ENCODE measurements at regions of chr6 and their contacts with region 1.

Region 1: DNA sequence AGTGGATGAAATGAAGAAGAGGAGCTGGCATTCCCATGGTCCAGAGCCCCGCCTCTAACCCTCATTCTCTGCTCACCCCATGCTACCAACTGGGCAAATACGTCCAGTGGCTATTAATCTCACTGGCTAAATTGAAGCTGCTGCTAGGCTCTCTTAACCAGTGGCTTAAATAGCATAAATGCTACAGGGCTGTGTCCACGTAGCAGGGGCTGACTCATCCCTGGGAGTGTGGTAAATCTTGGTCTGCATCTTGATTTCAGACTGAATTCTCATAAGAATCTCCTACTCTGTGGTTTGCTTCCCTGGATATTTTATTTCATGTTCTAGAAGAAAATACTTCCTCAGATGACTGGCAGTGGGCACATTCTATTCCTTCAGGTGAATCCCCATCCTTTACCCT is 193.1 kb upstream of the ARG1 start:
- DNase-seq: no peak
- H3K4me3 ChIP-seq: no peak overlapping the region
- H3K27ac ChIP-seq: peak overlapping the region; percentile 100
- H3K4me1 ChIP-seq: peaks cover 65% of the 10 kb centered on the region
- H3K27me3 ChIP-seq: no peaks in the 10 kb centered on the region
- CTCF ChIP-seq: no peak

Region 2: DNA sequence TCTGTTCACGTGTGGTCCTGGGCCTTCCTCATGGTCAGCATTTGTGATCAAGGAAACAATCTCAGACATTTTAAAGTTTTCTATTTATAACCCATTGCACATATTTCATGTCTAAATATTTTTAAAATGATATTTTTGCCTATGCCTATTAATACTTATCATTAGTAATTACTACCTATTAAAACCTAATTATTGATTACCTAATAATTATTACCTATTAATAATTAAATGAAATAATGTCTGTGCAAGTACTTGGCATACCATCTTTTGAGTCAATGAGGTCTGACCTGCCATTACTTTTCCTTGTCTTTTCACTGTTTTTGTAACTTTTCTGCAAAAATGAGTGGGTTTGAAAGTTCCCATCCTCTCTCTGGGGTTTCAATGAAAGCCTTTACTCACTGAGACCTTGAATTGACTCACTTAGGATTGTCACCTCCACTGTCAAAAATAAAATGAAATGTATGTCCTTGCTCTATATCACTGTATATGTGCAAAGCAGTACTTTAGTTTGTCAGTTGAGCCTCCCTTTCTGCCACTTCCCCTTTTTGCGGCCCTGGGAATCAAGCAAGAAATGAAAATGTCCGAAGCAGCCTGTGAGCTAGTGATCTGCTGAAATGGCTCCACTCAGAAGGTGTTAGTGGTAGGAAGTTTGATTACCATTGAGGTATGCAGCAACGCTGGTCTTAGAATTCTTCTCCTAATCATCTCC is 1273.8 kb before region 1 on chr6:
- CTCF ChIA-PET with region 1: no interaction called
- POLR2A ChIA-PET with region 1: no interaction called
- intact Hi-C with region 1: no loop called
- DNase-seq: no peak
- H3K4me3 ChIP-seq: no peak overlapping the region
- H3K27ac ChIP-seq: no peak overlapping the region
- H3K4me1 ChIP-seq: peaks cover 6% of the 10 kb centered on the region
- H3K27me3 ChIP-seq: no peaks in the 10 kb centered on the region
- CTCF ChIP-seq: no peak

Region 3: GRCh38 chr6:130602151-130602770 is 777.7 kb before region 1 on chr6:
- CTCF ChIA-PET with region 1: no interaction called
- POLR2A ChIA-PET with region 1: no interaction called
- intact Hi-C with region 1: loop called (anchors 5 kb)
- DNase-seq: peak; percentile 96
- H3K4me3 ChIP-seq: no peak overlapping the region
- H3K27ac ChIP-seq: peak overlapping the region; percentile 85
- H3K4me1 ChIP-seq: peaks cover 45% of the 10 kb centered on the region
- H3K27me3 ChIP-seq: no peaks in the 10 kb centered on the region
- CTCF ChIP-seq: no peak

Region 4: GRCh38 chr6:130900913-130901312 is 479.0 kb before region 1 on chr6:
- CTCF ChIA-PET with region 1: no interaction called
- POLR2A ChIA-PET with region 1: interaction called, 11 read pairs
- intact Hi-C with region 1: no loop called
- DNase-seq: no peak
- H3K4me3 ChIP-seq: no peak overlapping the region
- H3K27ac ChIP-seq: no peak overlapping the region
- H3K4me1 ChIP-seq: no peaks in the 10 kb centered on the region
- H3K27me3 ChIP-seq: no peaks in the 10 kb centered on the region
- CTCF ChIP-seq: no peak

Region 5: GRCh38 chr6:131129689-131130545 is 250.0 kb before region 1 on chr6:
- CTCF ChIA-PET with region 1: interaction called, 3 read pairs
- POLR2A ChIA-PET with region 1: no interaction called
- intact Hi-C with region 1: loop called (anchors 1 kb)
- DNase-seq: no peak
- H3K4me3 ChIP-seq: no peak overlapping the region
- H3K27ac ChIP-seq: peak overlapping the region; percentile 21
- H3K4me1 ChIP-seq: peaks cover 40% of the 10 kb centered on the region
- H3K27me3 ChIP-seq: no peaks in the 10 kb centered on the region
- CTCF ChIP-seq: no peak

Region 6: GRCh38 chr6:131231103-131231502 is 148.8 kb before region 1 on chr6:
- CTCF ChIA-PET with region 1: no interaction called
- POLR2A ChIA-PET with region 1: interaction called, 14 read pairs
- intact Hi-C with region 1: no loop called
- DNase-seq: no peak
- H3K4me3 ChIP-seq: no peak overlapping the region
- H3K27ac ChIP-seq: peak overlapping the region; percentile 65
- H3K4me1 ChIP-seq: peaks cover 73% of the 10 kb centered on the region
- H3K27me3 ChIP-seq: no peaks in the 10 kb centered on the region
- CTCF ChIP-seq: no peak

Region 7: DNA sequence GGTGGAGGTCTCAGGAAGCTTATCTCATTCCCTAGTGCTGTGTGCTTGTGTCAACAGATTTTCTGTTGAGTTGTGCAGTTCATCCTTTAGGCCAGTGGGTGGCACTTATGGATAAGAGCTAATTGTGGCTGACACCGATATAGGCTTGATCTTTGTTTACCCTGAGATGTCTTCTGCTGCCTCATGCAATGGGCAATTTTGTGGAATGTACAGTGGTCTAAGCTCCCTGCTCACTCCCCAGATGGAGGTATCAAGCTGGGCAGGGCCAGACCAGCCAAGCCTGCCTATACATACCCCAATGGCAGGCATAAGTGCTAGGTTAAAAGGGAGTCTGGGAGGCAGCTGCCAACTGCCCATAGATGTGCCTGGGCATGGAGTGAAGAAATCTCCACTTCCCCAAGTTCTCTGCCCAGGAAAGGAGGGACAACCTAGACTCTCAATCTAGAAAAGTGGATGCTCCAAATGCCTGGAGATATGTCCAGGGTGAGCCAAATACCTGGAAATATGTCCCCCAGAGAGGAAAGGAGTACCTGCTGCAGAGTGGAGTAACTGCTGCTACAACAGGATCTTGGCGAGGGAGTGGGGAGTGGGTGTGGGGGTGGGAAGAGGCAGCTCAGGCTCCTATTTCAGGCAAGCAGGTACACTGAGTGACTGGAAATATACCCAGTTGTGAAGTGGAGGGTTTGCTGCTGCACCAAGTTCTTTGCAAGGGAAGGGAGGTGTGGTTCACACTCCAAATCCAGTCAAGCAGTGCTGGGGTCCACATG is 139.9 kb after region 1 on chr6:
- CTCF ChIA-PET with region 1: no interaction called
- POLR2A ChIA-PET with region 1: no interaction called
- intact Hi-C with region 1: loop called (anchors 5 kb)
- DNase-seq: peak; percentile 85
- H3K4me3 ChIP-seq: no peak overlapping the region
- H3K27ac ChIP-seq: no peak overlapping the region
- H3K4me1 ChIP-seq: no peaks in the 10 kb centered on the region
- H3K27me3 ChIP-seq: no peaks in the 10 kb centered on the region
- CTCF ChIP-seq: peak; percentile 72

Region 8: GRCh38 chr6:131627724-131628682 is 248.1 kb after region 1 on chr6 and contains the start of gene MED23:
- CTCF ChIA-PET with region 1: no interaction called
- POLR2A ChIA-PET with region 1: no interaction called
- intact Hi-C with region 1: loop called (anchors 5 kb)
- DNase-seq: peak; percentile 96
- H3K4me3 ChIP-seq: peak within 1 kb of the TSS; percentile 72
- H3K27ac ChIP-seq: peak within 1 kb of the TSS; percentile 64
- H3K4me1 ChIP-seq: peaks cover 17% of the 10 kb centered on the region
- H3K27me3 ChIP-seq: no peaks in the 10 kb centered on the region
- CTCF ChIP-seq: peak; percentile 100
- total RNA-seq, gene MED23: 31.7 and 32.3 TPM in 2 replicates

Measured in A673 (cell line).